Mammary epithelial cell (primary cell): ENCODE measurements at regions of chr12 and their contacts with region 1.

Region 1: GRCh38 chr12:122356192-122356635 is 66.3 kb downstream of the CLIP1 start:
- DNase-seq: peak; percentile 72
- H3K4me3 ChIP-seq: no peak overlapping the region
- H3K27ac ChIP-seq: no peak overlapping the region
- H3K4me1 ChIP-seq: no peaks in the 10 kb centered on the region
- H3K27me3 ChIP-seq: no peaks in the 10 kb centered on the region
- CTCF ChIP-seq: peak; percentile 69 to 90

Region 2: DNA sequence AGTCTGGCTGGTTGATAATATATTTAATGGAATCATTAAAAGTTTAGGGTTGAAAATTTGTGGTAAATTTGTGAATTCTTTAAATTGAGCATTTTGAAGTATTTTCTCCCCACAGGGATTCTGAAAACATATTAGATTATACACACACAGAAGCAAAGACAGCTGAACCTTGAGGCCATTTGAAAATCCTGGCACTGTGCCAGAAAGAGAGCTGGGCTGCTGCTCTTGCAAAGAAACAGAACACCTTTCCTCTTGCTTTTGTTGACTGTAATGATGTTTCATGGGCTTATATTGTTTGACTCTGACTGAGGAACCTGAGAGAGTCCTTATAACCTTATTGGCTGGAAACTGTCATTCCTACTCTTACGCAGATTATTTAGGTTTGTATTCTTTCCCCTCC is 951.5 kb before region 1 on chr12:
- CTCF ChIA-PET with region 1: no interaction called
- dilution Hi-C with region 1: no loop called
- in situ Hi-C with region 1: no loop called
- intact Hi-C with region 1: no loop called
- DNase-seq: no peak
- H3K4me3 ChIP-seq: no peak overlapping the region
- H3K27ac ChIP-seq: no peak overlapping the region
- H3K4me1 ChIP-seq: peaks cover 10% of the 10 kb centered on the region
- H3K27me3 ChIP-seq: no peaks in the 10 kb centered on the region
- CTCF ChIP-seq: no peak

Region 3: GRCh38 chr12:122031342-122032216 is 324.6 kb before region 1 on chr12:
- CTCF ChIA-PET with region 1: no interaction called
- dilution Hi-C with region 1: no loop called
- in situ Hi-C with region 1: no loop called
- intact Hi-C with region 1: no loop called
- DNase-seq: no peak
- H3K4me3 ChIP-seq: no peak overlapping the region
- H3K27ac ChIP-seq: no peak overlapping the region
- H3K4me1 ChIP-seq: peaks cover 55% of the 10 kb centered on the region
- H3K27me3 ChIP-seq: no peaks in the 10 kb centered on the region
- CTCF ChIP-seq: peak; percentile 64 to 73

Region 4: GRCh38 chr12:122336015-122336946 is 19.9 kb before region 1 on chr12:
- CTCF ChIA-PET with region 1: no interaction called
- dilution Hi-C with region 1: no loop called
- in situ Hi-C with region 1: no loop called
- intact Hi-C with region 1: loop called (anchors 1 kb)
- DNase-seq: no peak
- H3K4me3 ChIP-seq: no peak overlapping the region
- H3K27ac ChIP-seq: no peak overlapping the region
- H3K4me1 ChIP-seq: no peaks in the 10 kb centered on the region
- H3K27me3 ChIP-seq: no peaks in the 10 kb centered on the region
- CTCF ChIP-seq: peak; percentile 81 to 88

Region 5: GRCh38 chr12:122427412-122427811 is 71.2 kb after region 1 on chr12:
- CTCF ChIA-PET with region 1: interaction called, 11 read pairs
- dilution Hi-C with region 1: no loop called
- in situ Hi-C with region 1: no loop called
- intact Hi-C with region 1: no loop called
- DNase-seq: no peak
- H3K4me3 ChIP-seq: no peak overlapping the region
- H3K27ac ChIP-seq: no peak overlapping the region
- H3K4me1 ChIP-seq: peaks cover 8% of the 10 kb centered on the region
- H3K27me3 ChIP-seq: no peaks in the 10 kb centered on the region
- CTCF ChIP-seq: no peak